ENCODE measurements at regions of chr1 and their contacts with region 1.

Region 1: GRCh38 chr1:226642876-226643576 is 94.5 kb downstream of the STUM start:
- DNase-seq: peak; percentile 59
- H3K4me3 Mint-ChIP-seq: no peak overlapping the region
- H3K27ac Mint-ChIP-seq: peak overlapping the region; percentile 78
- H3K4me1 Mint-ChIP-seq: peaks cover 37% of the 10 kb centered on the region
- H3K27me3 Mint-ChIP-seq: no peaks in the 10 kb centered on the region

Region 2: DNA sequence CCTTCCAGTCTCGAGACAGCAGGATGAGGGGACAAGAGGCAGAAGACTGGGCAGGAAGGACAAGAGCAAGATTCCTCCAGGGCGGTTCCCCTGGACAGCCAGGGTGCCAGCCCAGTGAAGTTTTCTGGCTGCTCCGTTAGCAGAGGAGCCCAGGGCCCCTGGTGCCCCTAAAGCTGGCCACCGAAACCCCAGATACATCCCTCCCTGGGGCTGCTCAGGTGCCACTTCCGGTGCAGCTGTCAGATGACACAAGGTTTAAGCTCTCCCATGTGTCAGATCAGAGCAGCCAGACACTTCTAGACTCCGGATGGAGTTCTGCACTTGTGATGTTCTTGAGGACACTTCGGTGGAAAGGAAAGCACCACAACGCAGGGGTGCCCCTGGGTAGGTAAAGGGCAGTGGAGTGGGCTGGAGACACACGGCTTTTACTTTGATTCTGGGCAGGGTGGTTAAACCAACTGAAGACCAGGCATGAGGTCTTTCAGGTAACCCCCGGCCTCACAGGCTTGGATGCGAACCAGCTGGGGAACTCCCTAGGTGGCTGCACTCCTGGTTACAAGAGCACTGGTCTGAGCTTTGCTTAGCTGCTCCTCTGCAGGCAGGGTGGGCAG is 10.4 kb after region 1 on chr1:
- CTCF ChIA-PET with region 1: interaction called, 3 read pairs
- POLR2A ChIA-PET with region 1: interaction called, 11 read pairs
- DNase-seq: peak; percentile 75
- H3K4me3 Mint-ChIP-seq: peak overlapping the region; percentile 56
- H3K27ac Mint-ChIP-seq: peak overlapping the region; percentile 88
- H3K4me1 Mint-ChIP-seq: peaks cover 62% of the 10 kb centered on the region
- H3K27me3 Mint-ChIP-seq: no peaks in the 10 kb centered on the region

Region 3: GRCh38 chr1:226662642-226663326 is 19.8 kb after region 1 on chr1:
- CTCF ChIA-PET with region 1: interaction called, 6 read pairs
- POLR2A ChIA-PET with region 1: interaction called, 12 read pairs
- DNase-seq: peak; percentile 89
- H3K4me3 Mint-ChIP-seq: peak overlapping the region; percentile 57
- H3K27ac Mint-ChIP-seq: peak overlapping the region; percentile 92
- H3K4me1 Mint-ChIP-seq: peaks cover 86% of the 10 kb centered on the region
- H3K27me3 Mint-ChIP-seq: no peaks in the 10 kb centered on the region

Region 4: DNA sequence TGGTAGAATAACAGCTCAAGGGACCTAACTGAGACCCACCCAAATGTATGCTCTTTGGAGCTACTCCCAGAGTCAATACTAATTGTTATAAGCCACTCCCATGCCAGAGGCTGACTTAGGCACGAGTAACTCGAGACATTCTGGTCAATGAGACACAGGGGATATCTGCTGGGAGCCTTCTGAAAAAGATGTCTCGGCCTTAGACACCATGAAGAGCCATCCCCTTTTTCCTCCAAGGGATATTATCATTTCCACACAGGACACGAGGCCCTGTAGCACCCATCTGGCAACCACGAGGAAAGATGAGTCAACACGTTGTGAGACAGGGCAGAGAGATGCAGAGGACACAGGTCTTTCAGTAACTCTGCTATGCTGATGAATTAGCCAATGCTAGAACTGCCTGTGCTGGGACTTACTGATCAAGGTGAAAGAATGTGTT is 65.3 kb after region 1 on chr1:
- CTCF ChIA-PET with region 1: no interaction called
- POLR2A ChIA-PET with region 1: no interaction called
- DNase-seq: no peak
- H3K4me3 Mint-ChIP-seq: no peak overlapping the region
- H3K27ac Mint-ChIP-seq: peak overlapping the region; percentile 71
- H3K4me1 Mint-ChIP-seq: peaks cover 68% of the 10 kb centered on the region
- H3K27me3 Mint-ChIP-seq: no peaks in the 10 kb centered on the region

Measured in activated CD4-positive, alpha-beta memory T cell treated with anti-CD3 and anti-CD28 coated beads, Interleukin-2, amount 10 ng/mL, durations not matched to agents 7 days and 5 days (primary cell).